ENCODE measurements at regions of chr12 and their contacts with region 1.

Region 1: DNA sequence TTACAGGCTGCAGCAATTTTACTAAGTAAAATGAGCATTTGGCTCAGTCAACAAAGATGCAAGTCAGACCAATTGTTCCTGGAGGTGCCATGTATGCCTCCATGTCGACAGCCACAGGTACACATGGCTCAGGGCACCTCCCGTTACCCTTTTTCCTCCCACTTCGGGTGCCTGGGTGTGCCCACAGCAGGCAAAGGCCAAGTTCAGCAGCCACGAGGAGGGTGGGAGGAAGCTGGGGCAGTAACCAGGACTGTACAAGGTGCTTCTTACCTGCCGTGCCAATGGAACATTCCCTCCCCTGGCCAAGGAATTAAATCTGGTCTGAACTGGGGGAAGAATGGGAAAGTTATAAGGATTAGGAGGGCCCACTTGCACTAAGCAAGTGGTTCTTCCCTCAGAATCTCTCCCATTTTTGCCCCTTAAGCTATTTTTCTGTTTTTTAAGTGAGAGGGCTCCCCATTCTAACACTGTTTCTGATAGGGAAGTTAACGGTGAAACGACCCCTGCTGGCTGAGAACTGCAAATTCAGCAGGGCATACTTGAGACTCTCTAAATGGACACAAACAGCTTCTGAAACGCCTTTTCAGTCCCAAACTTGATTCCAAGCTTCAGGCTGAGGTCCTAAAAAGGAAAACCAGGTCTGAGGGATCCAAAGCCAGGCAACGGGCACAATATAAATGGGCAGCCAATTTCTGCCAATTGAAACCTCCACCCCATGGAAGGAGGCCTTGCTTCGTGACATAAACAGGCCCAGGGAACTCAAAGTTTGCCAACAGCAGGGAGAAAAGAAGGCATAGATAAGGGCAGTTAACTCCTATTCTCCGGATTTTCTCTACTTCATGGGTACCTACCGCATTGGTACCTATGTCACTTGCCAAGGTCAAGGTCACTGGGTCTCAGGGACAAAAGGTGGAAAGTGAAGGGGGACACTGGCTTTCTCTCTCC is 24.8 kb downstream of the CLECL1 start:
- DNase-seq: peak; percentile 30
- H3K4me3 ChIP-seq: no peak overlapping the region
- H3K27ac ChIP-seq: peak overlapping the region; percentile 3
- H3K27me3 ChIP-seq: peaks cover 2% of the 10 kb centered on the region
- CTCF ChIP-seq: peak; percentile 89

Region 2: GRCh38 chr12:9634177-9634803 is 73.8 kb before region 1 on chr12:
- CTCF ChIA-PET with region 1: interaction called, 187 read pairs
- POLR2A ChIA-PET with region 1: no interaction called
- DNase-seq: no peak
- H3K4me3 ChIP-seq: no peak overlapping the region
- H3K27ac ChIP-seq: no peak overlapping the region
- H3K27me3 ChIP-seq: no peaks in the 10 kb centered on the region
- CTCF ChIP-seq: peak; percentile 78

Region 3: DNA sequence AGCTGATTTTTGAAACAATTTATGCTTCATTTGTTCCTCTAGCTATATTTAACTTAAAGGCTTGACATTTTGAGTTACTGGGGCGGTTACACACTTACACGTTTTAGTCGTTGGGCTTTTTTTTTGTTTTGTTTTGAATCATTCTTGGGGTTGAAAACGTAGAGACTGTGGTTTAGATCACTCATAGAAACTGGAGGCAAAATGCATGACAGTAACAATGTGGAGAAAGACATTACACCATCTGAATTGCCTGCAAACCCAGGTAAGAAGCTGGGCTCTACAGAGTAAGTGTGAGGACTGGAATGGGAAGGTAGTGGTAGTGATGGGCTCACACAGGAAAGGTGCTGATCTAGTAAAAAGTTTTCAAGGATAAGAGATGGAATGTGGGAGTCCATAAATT is 38.6 kb before region 1 on chr12 and contains the start of gene CLEC2D:
- CTCF ChIA-PET with region 1: interaction called, 10 read pairs
- POLR2A ChIA-PET with region 1: no interaction called
- DNase-seq: no peak
- H3K4me3 ChIP-seq: no peak within 1 kb of the TSS
- H3K27ac ChIP-seq: no peak within 1 kb of the TSS
- H3K27me3 ChIP-seq: no peaks in the 10 kb centered on the region
- CTCF ChIP-seq: no peak
- polyA plus RNA-seq, gene CLEC2D: 2.3 and 2.4 TPM in 2 replicates

Region 4: DNA sequence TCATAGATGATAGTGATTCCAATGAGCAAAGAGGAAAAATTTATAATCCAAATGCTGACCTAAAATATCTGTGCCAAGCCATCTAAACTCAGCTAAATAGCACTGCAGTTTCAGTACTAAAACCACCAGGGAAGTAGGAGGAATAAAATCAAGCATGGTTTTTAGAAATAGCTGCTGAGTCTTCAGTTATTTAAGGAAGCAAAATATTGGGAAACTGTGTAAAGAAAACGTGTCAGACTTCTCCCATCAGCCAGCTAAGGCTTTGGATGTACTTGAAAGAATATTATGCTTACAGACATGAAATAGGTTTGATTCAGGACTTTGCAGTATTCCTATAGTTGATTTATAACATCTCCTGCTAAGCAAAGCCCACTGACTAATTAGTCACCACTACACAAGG is 13.9 kb before region 1 on chr12:
- CTCF ChIA-PET with region 1: interaction called, 19 read pairs
- POLR2A ChIA-PET with region 1: no interaction called
- DNase-seq: no peak
- H3K4me3 ChIP-seq: no peak overlapping the region
- H3K27ac ChIP-seq: no peak overlapping the region
- H3K27me3 ChIP-seq: no peaks in the 10 kb centered on the region
- CTCF ChIP-seq: no peak

Measured in AG04450 (cell line).